ENCODE measurements at regions of chr10 and their contacts with region 1.

Region 1: GRCh38 chr10:110225756-110226542 is 18.5 kb downstream of the MXI1 start:
- DNase-seq: peak; percentile 88
- H3K4me3 ChIP-seq: peak overlapping the region; percentile 78
- H3K27ac ChIP-seq: peak overlapping the region; percentile 77
- H3K27me3 ChIP-seq: no peaks in the 10 kb centered on the region
- CTCF ChIP-seq: peak; percentile 57

Region 2: DNA sequence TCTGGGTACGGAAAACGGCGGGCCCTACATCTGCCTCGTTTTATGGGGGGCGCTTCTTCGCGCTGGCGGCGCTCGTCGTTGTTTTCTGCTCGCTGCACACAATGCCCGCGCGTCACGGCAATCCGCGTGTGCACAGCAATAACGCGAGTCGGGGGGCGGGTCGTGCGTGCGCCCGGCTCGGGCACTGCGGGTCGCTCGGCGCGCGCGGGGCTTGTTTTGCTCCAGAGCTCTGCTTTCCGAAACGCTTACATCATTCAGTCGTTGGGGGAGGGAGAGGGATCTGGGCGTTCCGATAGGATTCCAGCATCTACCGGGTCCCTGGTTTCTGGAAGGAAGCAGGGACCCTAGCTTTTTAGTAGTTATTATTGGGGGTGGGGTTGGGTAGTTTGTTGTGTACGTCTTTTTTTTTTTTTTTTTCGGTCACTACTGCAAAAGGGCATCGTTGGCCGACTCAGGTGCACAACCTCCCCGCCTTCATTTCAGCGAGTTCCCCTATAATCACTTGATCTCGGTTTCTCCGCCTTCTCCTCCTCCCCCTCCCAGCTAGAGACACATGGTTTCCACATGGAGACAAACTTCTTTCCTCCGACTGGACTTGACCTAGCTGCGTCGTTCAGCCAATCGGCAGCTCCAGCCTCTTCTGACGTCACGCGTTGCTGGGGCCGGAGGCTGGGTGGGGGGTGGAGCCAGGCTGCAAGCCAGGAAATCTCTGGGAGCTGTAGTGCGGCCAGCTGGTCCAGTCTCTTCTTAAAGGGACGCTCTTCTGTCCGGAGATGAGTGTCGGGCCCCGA is 15.1 kb before region 1 on chr10:
- CTCF ChIA-PET with region 1: interaction called, 24 read pairs
- POLR2A ChIA-PET with region 1: interaction called, 19 read pairs
- DNase-seq: peak; percentile 94
- H3K4me3 ChIP-seq: peak overlapping the region; percentile 78
- H3K27ac ChIP-seq: peak overlapping the region; percentile 91
- H3K27me3 ChIP-seq: peaks cover 2% of the 10 kb centered on the region
- CTCF ChIP-seq: no peak

Measured in AG04450 (cell line).